Activated naive CD4-positive, alpha-beta T cell treated with anti-CD3 and anti-CD28 coated beads for 36 hours (primary cell): ENCODE measurements at regions of chr6 and their contacts with region 1.

Region 1: DNA sequence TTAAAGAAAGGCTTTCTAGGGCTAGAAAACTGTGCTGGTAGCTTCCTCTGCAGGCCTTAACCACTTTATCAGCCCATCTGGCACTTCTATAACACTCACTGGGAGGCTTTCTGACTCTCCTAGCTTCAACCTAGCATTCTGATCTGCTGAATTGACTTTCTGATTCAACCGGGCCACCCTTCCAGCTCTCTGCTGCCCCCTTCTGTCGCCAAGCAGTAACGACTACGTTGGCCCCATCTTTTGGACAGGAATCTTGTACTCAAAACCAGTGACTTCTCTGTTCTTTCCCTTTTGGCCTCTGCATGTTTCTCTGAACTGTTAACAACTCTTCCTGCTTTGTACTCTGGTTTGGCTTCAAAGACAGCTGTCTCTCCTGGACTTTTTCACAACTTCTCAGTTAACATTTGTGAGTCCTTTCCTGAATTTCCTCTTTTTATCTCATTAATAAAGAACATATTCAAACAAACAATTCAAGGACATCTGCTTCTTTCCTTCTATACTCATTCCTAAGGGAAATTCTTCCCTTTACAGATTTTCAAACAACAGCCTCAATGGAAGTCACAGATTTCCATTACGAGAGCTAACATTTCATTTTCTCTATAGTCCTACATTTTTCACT is 43.9 kb upstream of the FAM135A start:
- DNase-seq: peak; percentile 76
- H3K4me3 Mint-ChIP-seq: no peak overlapping the region
- H3K27ac Mint-ChIP-seq: no peak overlapping the region
- H3K4me1 Mint-ChIP-seq: no peaks in the 10 kb centered on the region
- H3K27me3 Mint-ChIP-seq: peaks cover 9% of the 10 kb centered on the region

Region 2: GRCh38 chr6:70304616-70305015 is 64.8 kb before region 1 on chr6:
- CTCF ChIA-PET with region 1: interaction called, 100 read pairs
- intact Hi-C with region 1: no loop called
- DNase-seq: no peak
- H3K4me3 Mint-ChIP-seq: no peak overlapping the region
- H3K27ac Mint-ChIP-seq: no peak overlapping the region
- H3K4me1 Mint-ChIP-seq: no peaks in the 10 kb centered on the region
- H3K27me3 Mint-ChIP-seq: peaks cover 20% of the 10 kb centered on the region

Region 3: DNA sequence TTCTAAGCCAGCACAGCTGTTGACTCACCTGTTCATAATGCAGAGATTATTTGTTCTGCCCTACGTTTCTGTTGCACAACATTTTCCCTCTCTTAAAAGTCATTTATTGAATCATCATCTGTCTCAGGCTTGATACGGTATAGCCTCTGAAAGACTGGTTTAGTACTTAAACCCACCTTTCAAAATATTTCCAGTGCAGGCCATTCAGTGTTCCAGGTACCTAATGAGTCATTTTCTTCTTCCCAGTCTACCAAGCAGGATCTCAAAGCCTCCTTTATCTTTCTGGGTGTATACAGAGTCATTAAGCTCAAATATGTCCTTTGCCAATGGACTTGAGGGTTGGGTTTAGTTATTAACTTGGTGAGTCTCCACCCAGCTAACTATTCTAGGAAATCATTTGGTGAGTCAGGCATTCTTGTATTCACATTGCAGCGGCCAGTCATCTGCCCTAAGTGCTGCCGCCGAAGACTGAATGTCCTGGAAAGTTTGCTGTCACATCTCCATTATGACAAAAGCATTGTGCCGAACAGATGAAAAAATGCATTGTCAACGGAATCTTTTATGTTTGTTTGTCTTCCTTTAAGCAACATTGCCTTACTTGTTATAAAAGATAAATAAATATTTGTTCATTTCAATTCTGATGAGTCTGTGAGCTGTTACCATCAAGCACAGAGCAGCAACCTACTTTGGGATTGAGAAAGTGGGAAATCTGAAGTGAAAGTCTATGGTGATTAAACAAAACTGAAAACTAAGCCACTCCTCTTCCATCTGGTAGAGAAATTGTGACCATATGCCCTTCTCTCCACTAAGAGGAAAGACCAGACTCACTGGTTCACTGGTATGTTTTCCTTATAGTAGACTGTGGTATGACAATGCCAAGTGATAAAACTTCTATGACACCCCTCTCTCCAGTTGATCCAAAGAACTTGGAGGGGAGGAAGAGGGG is 29.6 kb after region 1 on chr6:
- CTCF ChIA-PET with region 1: no interaction called
- intact Hi-C with region 1: no loop called
- DNase-seq: no peak
- H3K4me3 Mint-ChIP-seq: no peak overlapping the region
- H3K27ac Mint-ChIP-seq: no peak overlapping the region
- H3K4me1 Mint-ChIP-seq: no peaks in the 10 kb centered on the region
- H3K27me3 Mint-ChIP-seq: peaks cover 16% of the 10 kb centered on the region

Region 4: DNA sequence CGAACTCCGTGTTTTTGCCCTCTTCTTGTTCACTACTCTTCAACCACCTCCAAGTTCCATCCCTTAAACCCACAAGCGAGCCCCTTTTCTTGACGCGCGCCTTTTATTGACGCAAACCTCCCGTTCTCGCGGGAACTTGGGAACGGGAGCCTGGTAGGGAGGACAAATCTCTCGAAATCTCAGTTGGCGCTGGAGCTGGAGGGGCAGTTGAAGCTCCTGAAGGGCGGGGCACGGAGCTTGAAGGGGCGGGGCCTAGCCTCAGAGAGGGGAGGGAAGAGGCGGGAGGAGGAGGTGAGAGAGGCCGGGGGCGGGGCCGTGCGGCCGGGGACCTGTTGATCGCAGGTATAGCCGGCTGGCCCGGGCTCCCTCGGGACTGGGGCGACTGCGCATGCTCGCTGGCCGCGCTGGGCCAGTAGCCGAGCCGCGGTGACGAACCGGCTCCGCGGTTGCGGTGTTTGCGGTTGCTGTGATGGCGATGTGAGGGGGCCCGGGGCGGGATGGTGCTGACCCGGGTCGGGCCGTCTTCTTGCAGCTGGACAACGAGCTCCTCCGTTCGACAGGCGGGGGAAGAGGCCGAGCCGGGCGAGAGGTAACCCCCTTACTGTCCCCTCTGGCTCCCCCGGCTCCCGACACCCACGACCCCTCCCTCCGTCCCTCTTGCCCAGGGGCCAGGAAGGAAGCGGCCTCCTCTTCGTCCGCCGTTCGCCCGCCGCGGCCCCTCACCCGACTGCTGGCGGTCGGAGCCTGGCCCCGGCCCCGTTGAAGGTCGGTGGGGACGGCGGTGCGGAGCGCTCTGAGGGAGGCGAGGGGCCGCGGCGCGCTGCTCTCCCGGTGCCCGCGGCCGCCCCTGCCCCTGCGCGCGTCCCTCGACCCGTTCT is 43.9 kb after region 1 on chr6 and contains the start of gene FAM135A:
- CTCF ChIA-PET with region 1: interaction called, 5 read pairs
- intact Hi-C with region 1: loop called (anchors 2 kb)
- DNase-seq: peak; percentile 99
- H3K4me3 Mint-ChIP-seq: peak within 1 kb of the TSS; percentile 99
- H3K27ac Mint-ChIP-seq: peak within 1 kb of the TSS; percentile 84
- H3K4me1 Mint-ChIP-seq: peaks cover 16% of the 10 kb centered on the region
- H3K27me3 Mint-ChIP-seq: no peaks in the 10 kb centered on the region
- total RNA-seq, gene FAM135A: 11.5 to 11.9 TPM

Region 5: DNA sequence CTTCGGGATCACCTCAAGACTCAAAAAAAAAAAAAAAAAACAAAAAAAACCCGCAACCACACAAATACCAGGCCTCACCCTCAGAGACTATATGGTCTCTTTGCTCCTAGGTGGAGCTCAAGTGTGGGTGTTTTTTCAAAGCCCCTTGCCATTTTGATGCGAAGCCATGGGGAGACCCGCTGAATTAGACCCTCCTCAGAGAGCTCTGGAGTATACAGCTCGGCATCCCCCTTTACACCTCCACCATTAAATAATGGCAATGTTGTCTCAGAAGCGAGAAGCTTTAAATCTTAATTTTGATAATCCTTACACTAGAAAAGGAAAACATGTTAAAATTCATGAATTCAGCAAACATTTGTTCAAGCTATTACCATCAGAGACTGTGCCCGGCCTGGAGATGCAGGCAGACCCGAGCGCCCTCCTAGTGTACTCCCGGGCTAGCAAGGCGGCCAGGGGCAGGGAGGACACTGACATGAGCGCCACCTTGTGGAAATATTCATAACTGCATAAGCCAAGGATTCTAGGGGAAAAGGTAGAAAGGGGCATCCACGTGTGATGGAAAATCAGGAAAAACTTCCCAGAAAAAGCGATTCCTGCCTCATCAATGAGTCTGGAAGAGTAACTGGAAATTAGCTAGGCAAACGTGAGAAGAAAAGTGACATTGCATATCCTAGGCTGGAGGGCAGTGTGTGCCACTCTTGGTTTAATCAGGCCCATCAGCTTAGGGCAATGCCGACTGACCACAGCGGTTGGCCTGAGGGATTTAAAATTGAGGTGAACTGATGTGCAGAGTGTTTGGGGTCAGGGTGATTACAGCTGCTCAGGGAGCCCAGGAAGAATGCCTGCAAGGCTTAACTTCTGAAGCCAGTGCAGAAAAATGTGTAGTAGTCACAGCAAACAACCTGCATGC is 514.9 kb after region 1 on chr6:
- CTCF ChIA-PET with region 1: interaction called, 9 read pairs
- intact Hi-C with region 1: loop called (anchors 5 kb)
- DNase-seq: peak; percentile 70
- H3K4me3 Mint-ChIP-seq: no peak overlapping the region
- H3K27ac Mint-ChIP-seq: no peak overlapping the region
- H3K4me1 Mint-ChIP-seq: no peaks in the 10 kb centered on the region
- H3K27me3 Mint-ChIP-seq: peaks cover 4% of the 10 kb centered on the region

Region 6: DNA sequence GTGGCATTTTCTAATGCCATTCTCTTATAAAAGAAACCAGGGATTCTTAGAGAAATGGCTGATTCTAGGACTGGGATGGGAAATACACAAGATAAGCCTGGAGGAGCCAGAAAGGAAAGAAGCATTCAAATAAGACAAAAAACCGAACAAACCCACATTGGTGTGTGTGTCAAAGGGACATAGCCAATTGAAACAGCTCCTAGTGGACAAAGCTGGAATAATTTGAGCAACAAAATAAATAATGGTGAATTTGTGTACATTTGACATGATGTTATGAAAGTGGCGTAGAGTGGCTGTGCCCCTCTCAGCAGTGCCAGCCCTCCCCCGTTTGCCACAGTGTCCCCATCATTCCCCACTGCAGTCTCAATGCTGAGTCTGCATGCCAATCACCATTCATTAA is 531.9 kb after region 1 on chr6:
- CTCF ChIA-PET with region 1: no interaction called
- intact Hi-C with region 1: no loop called
- DNase-seq: no peak
- H3K4me3 Mint-ChIP-seq: no peak overlapping the region
- H3K27ac Mint-ChIP-seq: no peak overlapping the region
- H3K4me1 Mint-ChIP-seq: no peaks in the 10 kb centered on the region
- H3K27me3 Mint-ChIP-seq: peaks cover 10% of the 10 kb centered on the region

Region 7: GRCh38 chr6:71012866-71013469 is 643.5 kb after region 1 on chr6:
- CTCF ChIA-PET with region 1: interaction called, 3 read pairs
- intact Hi-C with region 1: loop called (anchors 1 kb)
- DNase-seq: peak; percentile 17
- H3K4me3 Mint-ChIP-seq: no peak overlapping the region
- H3K27ac Mint-ChIP-seq: no peak overlapping the region
- H3K4me1 Mint-ChIP-seq: no peaks in the 10 kb centered on the region
- H3K27me3 Mint-ChIP-seq: peaks cover 11% of the 10 kb centered on the region